CD4-positive, alpha-beta T cell (primary cell): ENCODE measurements at regions of chr6 and their contacts with region 1.

Region 1: DNA sequence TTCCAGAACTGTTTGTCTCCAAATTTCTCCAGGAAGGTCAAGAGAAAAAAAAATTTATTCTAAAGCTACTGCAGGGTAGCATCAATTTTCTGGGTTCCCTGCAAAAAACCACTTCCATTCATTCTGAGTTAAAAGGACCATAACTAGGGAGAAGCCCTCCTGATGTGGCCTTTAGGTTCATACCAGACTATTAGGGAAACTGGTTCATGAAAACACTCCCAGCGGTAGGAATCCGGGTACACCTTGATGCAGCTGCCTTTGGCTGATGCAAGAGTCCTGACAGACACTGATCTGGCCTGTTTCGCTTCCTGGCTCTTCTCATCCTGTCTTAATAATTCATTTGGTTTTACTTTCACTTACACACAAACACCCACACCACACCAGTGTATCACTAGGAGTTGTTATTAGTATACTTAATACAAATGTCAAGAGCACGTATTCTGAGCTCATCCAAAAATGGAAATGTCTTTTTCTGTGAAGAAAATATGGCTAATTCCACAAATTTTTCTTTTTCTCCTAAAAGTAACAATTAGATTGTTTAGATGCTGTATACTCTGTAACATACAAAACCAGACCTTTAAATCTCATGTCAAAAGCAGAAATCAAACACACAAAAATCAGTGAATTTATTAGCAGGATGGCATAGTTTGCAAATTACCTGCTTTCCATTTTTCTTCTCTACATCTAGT is 38.4 kb upstream of the ARHGAP18 start:
- DNase-seq: peak; percentile 13 to 87 (median 30)
- ATAC-seq: peak; percentile 80
- H3K4me3 ChIP-seq: peak overlapping the region; percentile 12
- H3K4me3 Mint-ChIP-seq: peak overlapping the region; percentile 86
- H3K27ac ChIP-seq: peak overlapping the region; percentile 61 to 72
- H3K27ac Mint-ChIP-seq: peak overlapping the region; percentile 88
- H3K4me1 ChIP-seq: peaks cover 28% of the 10 kb centered on the region
- H3K4me1 Mint-ChIP-seq: peaks cover 61% of the 10 kb centered on the region
- H3K27me3 ChIP-seq: no peaks in the 10 kb centered on the region
- H3K27me3 Mint-ChIP-seq: no peaks in the 10 kb centered on the region
- CTCF ChIP-seq: no peak

Region 2: GRCh38 chr6:129598244-129599187 is 149.8 kb before region 1 on chr6:
- CTCF ChIA-PET with region 1: interaction called, 6 read pairs
- POLR2A ChIA-PET with region 1: interaction called, 7 read pairs
- intact Hi-C with region 1: loop called in 1 of 2 experiments (anchors 1 kb)
- DNase-seq: peak in 4 of 14 experiments; percentile 8 to 84 (median 80)
- ATAC-seq: peak; percentile 98
- H3K4me3 ChIP-seq: no peak overlapping the region
- H3K4me3 Mint-ChIP-seq: no peak overlapping the region
- H3K27ac ChIP-seq: no peak overlapping the region
- H3K27ac Mint-ChIP-seq: no peak overlapping the region
- H3K4me1 ChIP-seq: no peaks in the 10 kb centered on the region
- H3K4me1 Mint-ChIP-seq: no peaks in the 10 kb centered on the region
- H3K27me3 ChIP-seq: no peaks in the 10 kb centered on the region
- H3K27me3 Mint-ChIP-seq: no peaks in the 10 kb centered on the region
- CTCF ChIP-seq: peak; percentile 90

Region 3: DNA sequence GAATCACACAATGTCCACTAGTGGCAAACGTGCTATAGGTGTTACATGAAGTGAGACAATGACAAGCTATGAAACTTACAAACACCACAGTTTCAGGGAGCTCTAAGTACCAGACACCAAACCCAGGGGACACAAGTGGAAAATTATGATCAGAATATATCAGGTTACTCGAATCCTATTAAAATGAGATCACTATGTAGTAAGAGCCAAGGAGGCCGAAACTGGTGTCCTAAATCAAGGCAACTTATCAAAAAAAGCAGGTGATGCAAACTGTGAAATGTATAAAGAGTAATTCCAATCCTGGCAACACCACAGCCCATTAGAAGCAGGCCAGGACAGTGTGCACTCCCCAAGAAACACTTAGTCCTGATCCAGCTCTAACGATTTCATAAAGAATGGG is 138.7 kb before region 1 on chr6:
- CTCF ChIA-PET with region 1: no interaction called
- POLR2A ChIA-PET with region 1: no interaction called
- intact Hi-C with region 1: no loop called
- DNase-seq: no peak
- ATAC-seq: no peak
- H3K4me3 ChIP-seq: no peak overlapping the region
- H3K4me3 Mint-ChIP-seq: no peak overlapping the region
- H3K27ac ChIP-seq: no peak overlapping the region
- H3K27ac Mint-ChIP-seq: no peak overlapping the region
- H3K4me1 ChIP-seq: no peaks in the 10 kb centered on the region
- H3K4me1 Mint-ChIP-seq: no peaks in the 10 kb centered on the region
- H3K27me3 ChIP-seq: no peaks in the 10 kb centered on the region
- H3K27me3 Mint-ChIP-seq: no peaks in the 10 kb centered on the region
- CTCF ChIP-seq: no peak

Region 4: GRCh38 chr6:129672881-129673643 is 75.3 kb before region 1 on chr6:
- CTCF ChIA-PET with region 1: no interaction called
- POLR2A ChIA-PET with region 1: interaction called, 6 read pairs
- intact Hi-C with region 1: loop called in 1 of 2 experiments (anchors 2 kb)
- DNase-seq: peak in 4 of 14 experiments; percentile 38 to 70 (median 56)
- ATAC-seq: peak; percentile 48
- H3K4me3 ChIP-seq: no peak overlapping the region
- H3K4me3 Mint-ChIP-seq: peak overlapping the region; percentile 79
- H3K27ac ChIP-seq: peak overlapping the region in 1 of 2 donors; percentile 68
- H3K27ac Mint-ChIP-seq: peak overlapping the region; percentile 85
- H3K4me1 ChIP-seq: peaks cover 12% of the 10 kb centered on the region
- H3K4me1 Mint-ChIP-seq: peaks cover 34% of the 10 kb centered on the region
- H3K27me3 ChIP-seq: no peaks in the 10 kb centered on the region
- H3K27me3 Mint-ChIP-seq: no peaks in the 10 kb centered on the region
- CTCF ChIP-seq: no peak

Region 5: DNA sequence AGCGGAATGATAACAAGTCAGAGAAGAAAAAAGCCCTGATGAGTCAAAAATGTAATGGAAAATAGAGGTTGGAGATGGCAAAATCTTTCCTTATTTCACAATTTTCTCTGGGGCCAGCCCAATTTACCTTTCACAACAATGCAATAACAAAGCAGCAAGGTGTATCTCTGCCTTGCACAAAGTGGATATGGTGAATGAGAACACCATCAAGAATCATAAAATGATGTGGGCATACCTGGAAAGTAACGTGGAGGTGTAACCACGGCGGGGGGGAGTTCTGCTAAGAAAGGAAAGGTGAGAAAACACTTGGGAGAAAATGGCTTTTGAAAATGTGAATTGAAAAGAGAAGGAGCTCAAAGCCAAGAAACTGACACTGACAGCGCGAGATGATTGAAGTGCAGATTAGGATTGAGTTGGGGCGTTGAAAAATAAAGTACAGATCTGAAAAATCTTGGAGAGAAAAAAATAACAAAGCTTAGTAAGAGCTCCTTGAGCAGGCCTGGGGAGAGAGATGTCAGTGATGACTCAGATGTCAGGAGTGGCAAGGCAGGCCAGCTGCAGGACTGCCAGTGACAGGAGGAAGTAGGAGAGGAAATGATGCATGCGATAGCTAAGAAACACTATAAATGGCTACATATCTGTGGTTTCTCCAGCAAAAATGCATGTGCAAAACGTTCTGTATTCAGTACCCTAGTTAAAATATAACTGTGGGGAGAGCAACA is 64.6 kb before region 1 on chr6:
- CTCF ChIA-PET with region 1: interaction called, 3 read pairs
- POLR2A ChIA-PET with region 1: interaction called, 10 read pairs
- intact Hi-C with region 1: no loop called
- DNase-seq: peak; percentile 29 to 88 (median 59)
- ATAC-seq: peak; percentile 91
- H3K4me3 ChIP-seq: no peak overlapping the region
- H3K4me3 Mint-ChIP-seq: peak overlapping the region; percentile 31
- H3K27ac ChIP-seq: peak overlapping the region; percentile 9 to 58
- H3K27ac Mint-ChIP-seq: peak overlapping the region; percentile 68
- H3K4me1 ChIP-seq: peaks cover 45% of the 10 kb centered on the region
- H3K4me1 Mint-ChIP-seq: peaks cover 48% of the 10 kb centered on the region
- H3K27me3 ChIP-seq: no peaks in the 10 kb centered on the region
- H3K27me3 Mint-ChIP-seq: no peaks in the 10 kb centered on the region
- CTCF ChIP-seq: no peak

Region 6: DNA sequence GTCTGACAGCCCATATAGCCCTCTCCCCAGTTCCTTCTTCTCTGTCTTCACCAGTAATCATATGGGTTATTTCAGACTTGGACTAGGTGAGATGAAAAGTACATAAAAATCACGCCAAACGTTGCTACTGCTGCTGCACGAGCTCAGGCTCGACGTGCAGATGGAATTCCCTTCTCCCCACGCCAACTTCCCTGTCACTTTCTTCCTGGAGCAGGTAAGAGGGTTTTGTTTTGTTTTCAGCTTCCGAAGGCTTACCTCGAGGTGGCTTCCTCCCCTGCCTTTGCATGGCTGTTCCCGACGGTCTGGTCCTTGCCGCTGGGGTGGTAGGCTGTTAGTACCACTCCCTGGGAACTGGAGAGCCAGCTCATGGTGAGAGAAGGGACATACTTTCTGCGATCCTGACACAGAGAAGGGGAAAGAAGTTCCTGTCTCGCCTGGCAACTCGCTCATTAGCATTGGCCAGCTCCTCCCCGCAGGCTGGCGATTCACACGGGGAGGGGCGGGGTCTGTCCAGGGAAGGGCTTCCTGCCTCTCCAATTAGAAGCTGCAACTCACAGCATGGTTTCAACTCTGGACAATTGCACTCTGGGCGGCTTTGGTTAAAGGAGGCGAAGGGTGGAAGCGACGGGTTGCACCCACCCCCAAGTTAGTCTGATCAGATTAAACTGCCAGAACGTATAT is 38.4 kb before region 1 on chr6 and contains the start of gene ARHGAP18:
- CTCF ChIA-PET with region 1: no interaction called
- POLR2A ChIA-PET with region 1: interaction called, 12 read pairs
- intact Hi-C with region 1: no loop called
- DNase-seq: peak; percentile 36 to 84 (median 58)
- ATAC-seq: peak; percentile 87
- H3K4me3 ChIP-seq: peak within 1 kb of the TSS; percentile 85
- H3K4me3 Mint-ChIP-seq: peak within 1 kb of the TSS; percentile 92
- H3K27ac ChIP-seq: peak within 1 kb of the TSS in 1 of 2 donors; percentile 42
- H3K27ac Mint-ChIP-seq: peak within 1 kb of the TSS; percentile 28
- H3K4me1 ChIP-seq: peaks cover 25% of the 10 kb centered on the region
- H3K4me1 Mint-ChIP-seq: peaks cover 31% of the 10 kb centered on the region
- H3K27me3 ChIP-seq: no peaks in the 10 kb centered on the region
- H3K27me3 Mint-ChIP-seq: no peaks in the 10 kb centered on the region
- CTCF ChIP-seq: no peak
- total RNA-seq, gene ARHGAP18: 0.71 to 1.3 TPM

Region 7: DNA sequence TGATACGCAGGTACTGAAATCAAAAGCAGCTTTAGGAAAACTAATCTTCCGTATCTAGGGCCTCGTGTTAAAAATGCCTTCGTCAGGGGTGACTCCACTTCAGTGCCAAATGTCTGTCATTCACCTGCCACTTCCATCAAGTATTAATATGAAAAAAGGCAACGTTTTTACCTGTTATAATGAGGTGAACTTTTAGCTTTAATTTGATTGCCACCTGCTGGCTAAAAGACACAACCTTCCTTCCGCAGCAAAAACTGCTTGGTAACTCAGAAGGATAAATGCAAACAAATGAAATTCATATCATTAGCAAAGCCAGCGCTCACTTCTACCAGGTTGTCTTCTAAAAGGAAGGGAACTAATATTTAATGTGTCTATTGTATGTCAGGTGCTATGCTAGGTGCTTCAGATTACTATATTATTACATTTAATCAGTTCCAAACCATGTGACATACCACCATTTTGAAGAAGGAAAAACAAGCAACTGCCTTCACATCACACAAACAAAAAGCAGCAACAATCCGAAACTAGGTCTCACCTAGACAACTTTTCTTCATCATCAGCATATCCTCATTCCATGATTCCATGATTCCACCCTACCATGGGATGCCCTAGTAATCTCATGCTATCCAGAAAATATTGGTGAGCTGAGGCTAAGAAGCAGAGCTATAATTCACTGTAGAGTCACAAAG is 17.7 kb before region 1 on chr6:
- CTCF ChIA-PET with region 1: interaction called, 3 read pairs
- POLR2A ChIA-PET with region 1: interaction called, 12 read pairs
- intact Hi-C with region 1: loop called in 1 of 2 experiments (anchors 1 kb)
- DNase-seq: peak in 7 of 14 experiments; percentile 7 to 73 (median 54)
- ATAC-seq: peak; percentile 60
- H3K4me3 ChIP-seq: no peak overlapping the region
- H3K4me3 Mint-ChIP-seq: no peak overlapping the region
- H3K27ac ChIP-seq: no peak overlapping the region
- H3K27ac Mint-ChIP-seq: no peak overlapping the region
- H3K4me1 ChIP-seq: no peaks in the 10 kb centered on the region
- H3K4me1 Mint-ChIP-seq: peaks cover 14% of the 10 kb centered on the region
- H3K27me3 ChIP-seq: no peaks in the 10 kb centered on the region
- H3K27me3 Mint-ChIP-seq: no peaks in the 10 kb centered on the region
- CTCF ChIP-seq: peak; percentile 83

Region 8: GRCh38 chr6:130020907-130021629 is 272.7 kb after region 1 on chr6:
- CTCF ChIA-PET with region 1: no interaction called
- POLR2A ChIA-PET with region 1: interaction called, 24 read pairs
- intact Hi-C with region 1: no loop called
- DNase-seq: peak; percentile 64 to 92 (median 68)
- ATAC-seq: peak; percentile 51
- H3K4me3 ChIP-seq: peak overlapping the region; percentile 91
- H3K4me3 Mint-ChIP-seq: peak overlapping the region; percentile 100
- H3K27ac ChIP-seq: peak overlapping the region; percentile 31 to 71
- H3K27ac Mint-ChIP-seq: peak overlapping the region; percentile 96
- H3K4me1 ChIP-seq: peaks cover 14% of the 10 kb centered on the region
- H3K4me1 Mint-ChIP-seq: peaks cover 51% of the 10 kb centered on the region
- H3K27me3 ChIP-seq: no peaks in the 10 kb centered on the region
- H3K27me3 Mint-ChIP-seq: no peaks in the 10 kb centered on the region
- CTCF ChIP-seq: peak; percentile 75